Activated B cell treated with CpG ODN at 0.5 μM for 24 hours (primary cell): ENCODE measurements at regions of chr18 and their contacts with region 1.

Region 1: DNA sequence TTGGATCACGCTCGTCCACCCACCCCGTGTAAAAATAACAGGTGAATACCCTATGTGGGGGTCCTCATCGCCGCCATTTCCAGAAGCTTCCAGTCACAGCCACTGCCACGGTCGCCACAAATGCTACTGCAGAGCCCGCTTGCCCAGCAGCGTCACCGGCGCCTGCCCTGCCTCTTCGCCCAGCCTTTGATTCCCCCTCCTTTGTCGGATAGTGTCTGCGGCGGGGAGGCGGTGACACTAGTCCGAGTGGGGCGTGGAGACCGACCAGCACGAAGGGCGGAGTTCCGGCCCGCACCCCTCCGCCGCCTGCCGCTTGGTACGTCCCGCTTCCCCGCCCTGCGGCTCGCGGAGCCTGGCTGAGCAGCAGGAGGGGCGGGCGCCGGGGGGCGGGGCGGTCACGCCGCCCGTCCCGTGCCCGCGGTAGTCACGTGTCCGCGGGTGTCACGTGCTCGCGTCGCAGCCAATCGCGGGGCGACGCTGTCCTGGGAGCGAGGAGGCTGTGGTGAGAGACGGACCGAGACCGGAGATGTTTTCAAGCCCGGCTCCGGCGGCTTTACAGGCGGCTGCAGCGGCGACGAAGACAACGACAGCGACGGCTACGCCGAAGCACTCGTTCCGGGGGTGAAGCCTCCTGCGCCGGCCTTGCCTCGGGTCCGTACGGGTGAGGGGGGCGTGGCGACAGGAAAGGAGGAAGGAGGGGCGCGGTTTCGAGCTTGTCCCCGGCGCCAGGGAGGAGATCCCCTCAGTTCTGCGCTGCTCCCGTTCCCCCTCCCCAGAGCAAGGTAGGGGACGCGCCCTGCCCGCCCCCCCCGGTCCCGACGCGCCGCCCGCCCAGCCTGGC is at the start of gene ANKRD12:
- DNase-seq: peak; percentile 98
- ATAC-seq: peak; percentile 75
- H3K4me3 Mint-ChIP-seq: peak within 1 kb of the TSS; percentile 98
- H3K27ac Mint-ChIP-seq: peak within 1 kb of the TSS; percentile 99
- H3K4me1 Mint-ChIP-seq: peaks cover 62% of the 10 kb centered on the region
- H3K27me3 Mint-ChIP-seq: no peaks in the 10 kb centered on the region
- CTCF ChIP-seq: no peak
- total RNA-seq, gene ANKRD12: 121 and 125 TPM in 2 replicates

Region 2: GRCh38 chr18:8704361-8705279 is 431.9 kb before region 1 on chr18:
- CTCF ChIA-PET with region 1: no interaction called
- POLR2A ChIA-PET with region 1: interaction called, 3 read pairs
- intact Hi-C with region 1: loop called (anchors 1 kb)
- DNase-seq: peak; percentile 89
- ATAC-seq: peak; percentile 92
- H3K4me3 Mint-ChIP-seq: peak overlapping the region; percentile 89
- H3K27ac Mint-ChIP-seq: peak overlapping the region; percentile 41
- H3K4me1 Mint-ChIP-seq: peaks cover 26% of the 10 kb centered on the region
- H3K27me3 Mint-ChIP-seq: peaks cover 14% of the 10 kb centered on the region
- CTCF ChIP-seq: no peak

Region 3: GRCh38 chr18:8982416-8983184 is 153.9 kb before region 1 on chr18:
- CTCF ChIA-PET with region 1: no interaction called
- POLR2A ChIA-PET with region 1: no interaction called
- intact Hi-C with region 1: no loop called
- DNase-seq: no peak
- ATAC-seq: peak; percentile 65
- H3K4me3 Mint-ChIP-seq: no peak overlapping the region
- H3K27ac Mint-ChIP-seq: no peak overlapping the region
- H3K4me1 Mint-ChIP-seq: peaks cover 20% of the 10 kb centered on the region
- H3K27me3 Mint-ChIP-seq: no peaks in the 10 kb centered on the region
- CTCF ChIP-seq: no peak

Region 4: DNA sequence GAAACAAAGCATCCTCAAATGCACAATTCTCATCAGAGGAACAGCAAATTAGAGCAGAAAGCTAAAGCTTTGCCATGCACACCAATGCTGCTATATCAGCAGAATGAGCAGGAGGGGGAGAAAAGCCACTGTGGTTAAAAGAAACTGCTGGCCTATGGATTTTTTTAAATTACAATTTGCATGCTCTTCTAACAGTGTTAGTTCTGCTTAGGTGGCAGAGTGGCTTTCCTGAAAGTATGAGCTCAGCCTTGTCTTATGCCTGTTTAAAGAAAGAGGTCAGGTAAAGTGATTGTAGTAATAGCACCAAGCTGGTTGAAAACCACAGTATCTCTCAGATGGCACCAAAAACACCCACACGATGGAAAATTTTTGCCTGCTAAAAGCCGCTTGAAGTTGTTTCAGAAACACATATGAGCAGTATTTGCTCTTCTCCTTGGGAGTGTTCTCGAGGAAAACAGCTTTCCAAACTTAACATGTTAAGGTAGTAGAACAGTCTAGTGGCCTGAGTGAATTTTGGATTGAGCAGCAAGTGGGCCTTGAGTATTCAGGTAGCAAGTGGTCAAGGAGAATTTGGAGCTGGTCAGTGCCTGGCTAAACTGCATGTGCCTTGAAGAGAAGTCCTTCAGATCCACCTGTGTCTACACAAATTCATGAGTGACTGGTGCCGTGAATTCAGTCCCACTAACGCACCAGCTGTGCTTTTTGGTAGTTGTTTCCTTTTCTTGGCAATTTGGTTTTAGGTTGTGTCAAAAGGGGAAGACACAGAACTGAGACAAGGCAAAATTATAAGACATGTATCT is 53.6 kb before region 1 on chr18:
- CTCF ChIA-PET with region 1: interaction called, 6 read pairs
- POLR2A ChIA-PET with region 1: interaction called, 10 read pairs
- intact Hi-C with region 1: no loop called
- DNase-seq: no peak
- ATAC-seq: peak; percentile 83
- H3K4me3 Mint-ChIP-seq: peak overlapping the region; percentile 5
- H3K27ac Mint-ChIP-seq: peak overlapping the region; percentile 67
- H3K4me1 Mint-ChIP-seq: peaks cover 19% of the 10 kb centered on the region
- H3K27me3 Mint-ChIP-seq: no peaks in the 10 kb centered on the region
- CTCF ChIP-seq: no peak

Region 5: GRCh38 chr18:9102508-9103375 is 33.8 kb before region 1 on chr18 and contains the start of gene NDUFV2:
- CTCF ChIA-PET with region 1: interaction called, 19 read pairs
- POLR2A ChIA-PET with region 1: interaction called, 211 read pairs
- intact Hi-C with region 1: loop called (anchors 1 kb)
- DNase-seq: peak; percentile 99
- ATAC-seq: peak; percentile 96
- H3K4me3 Mint-ChIP-seq: peak within 1 kb of the TSS; percentile 94
- H3K27ac Mint-ChIP-seq: peak within 1 kb of the TSS; percentile 94
- H3K4me1 Mint-ChIP-seq: peaks cover 51% of the 10 kb centered on the region
- H3K27me3 Mint-ChIP-seq: no peaks in the 10 kb centered on the region
- CTCF ChIP-seq: no peak
- total RNA-seq, gene NDUFV2: 168 and 169 TPM in 2 replicates

Region 6: GRCh38 chr18:9117980-9118841 is 18.3 kb before region 1 on chr18:
- CTCF ChIA-PET with region 1: interaction called, 4 read pairs
- POLR2A ChIA-PET with region 1: interaction called, 257 read pairs
- intact Hi-C with region 1: loop called (anchors 1 kb)
- DNase-seq: no peak
- ATAC-seq: peak; percentile 35
- H3K4me3 Mint-ChIP-seq: peak overlapping the region; percentile 86
- H3K27ac Mint-ChIP-seq: peak overlapping the region; percentile 99
- H3K4me1 Mint-ChIP-seq: peaks cover 84% of the 10 kb centered on the region
- H3K27me3 Mint-ChIP-seq: no peaks in the 10 kb centered on the region
- CTCF ChIP-seq: no peak

Region 7: DNA sequence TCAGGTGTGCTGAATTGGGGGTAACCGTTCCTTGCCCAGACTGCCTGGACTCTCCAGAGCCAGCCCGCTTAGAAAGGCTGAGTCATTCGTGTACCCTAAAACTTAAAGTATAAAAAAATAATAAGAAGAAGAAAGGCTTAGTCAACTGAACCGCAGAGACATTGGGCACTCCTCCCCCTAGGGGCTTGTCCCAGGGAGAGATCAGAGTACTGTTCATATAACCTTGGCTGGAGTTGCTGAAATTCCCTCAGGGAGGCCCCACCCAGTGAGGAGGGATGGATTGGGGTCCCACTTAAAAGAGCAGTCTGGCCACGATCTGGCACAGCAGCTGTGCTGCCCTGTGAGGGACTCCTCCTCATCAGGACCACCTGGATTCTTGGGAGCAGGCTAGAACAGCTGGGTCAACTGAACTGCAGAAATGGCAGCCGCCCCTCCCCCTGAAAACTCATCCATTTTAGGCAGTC is 37.3 kb after region 1 on chr18:
- CTCF ChIA-PET with region 1: no interaction called
- POLR2A ChIA-PET with region 1: no interaction called
- intact Hi-C with region 1: no loop called
- DNase-seq: no peak
- ATAC-seq: no peak
- H3K4me3 Mint-ChIP-seq: no peak overlapping the region
- H3K27ac Mint-ChIP-seq: no peak overlapping the region
- H3K4me1 Mint-ChIP-seq: peaks cover 83% of the 10 kb centered on the region
- H3K27me3 Mint-ChIP-seq: no peaks in the 10 kb centered on the region
- CTCF ChIP-seq: no peak

Region 8: GRCh38 chr18:9334329-9334972 is 197.9 kb after region 1 on chr18 and contains the start of gene TWSG1:
- CTCF ChIA-PET with region 1: no interaction called
- POLR2A ChIA-PET with region 1: interaction called, 5 read pairs
- intact Hi-C with region 1: loop called (anchors 1 kb)
- DNase-seq: peak; percentile 86
- ATAC-seq: peak; percentile 94
- H3K4me3 Mint-ChIP-seq: peak within 1 kb of the TSS; percentile 89
- H3K27ac Mint-ChIP-seq: peak within 1 kb of the TSS; percentile 60
- H3K4me1 Mint-ChIP-seq: peaks cover 20% of the 10 kb centered on the region
- H3K27me3 Mint-ChIP-seq: no peaks in the 10 kb centered on the region
- CTCF ChIP-seq: no peak
- total RNA-seq, gene TWSG1: 4.1 and 4.8 TPM in 2 replicates

Region 9: GRCh38 chr18:9673296-9674251 is 537.0 kb after region 1 on chr18:
- CTCF ChIA-PET with region 1: no interaction called
- POLR2A ChIA-PET with region 1: no interaction called
- intact Hi-C with region 1: loop called (anchors 1 kb)
- DNase-seq: peak; percentile 25
- ATAC-seq: peak; percentile 95
- H3K4me3 Mint-ChIP-seq: peak overlapping the region; percentile 35
- H3K27ac Mint-ChIP-seq: peak overlapping the region; percentile 93
- H3K4me1 Mint-ChIP-seq: peaks cover 15% of the 10 kb centered on the region
- H3K27me3 Mint-ChIP-seq: no peaks in the 10 kb centered on the region
- CTCF ChIP-seq: no peak